ENCODE measurements at regions of chr1 and their contacts with region 1.

Region 1: GRCh38 chr1:174428033-174428432 is 19.7 kb upstream of the GPR52 start:
- DNase-seq: no peak
- H3K4me3 ChIP-seq: no peak overlapping the region
- H3K27ac ChIP-seq: no peak overlapping the region
- H3K4me1 ChIP-seq: no peaks in the 10 kb centered on the region
- H3K27me3 ChIP-seq: no peaks in the 10 kb centered on the region
- CTCF ChIP-seq: no peak
- EP300 ChIP-seq: no peak
- POLR2A ChIP-seq: no peak
- RAD21 ChIP-seq: no peak

Region 2: GRCh38 chr1:174391716-174392115 is 36.3 kb before region 1 on chr1:
- CTCF ChIA-PET with region 1: no interaction called
- POLR2A ChIA-PET with region 1: no interaction called
- DNase-seq: no peak
- H3K4me3 ChIP-seq: no peak overlapping the region
- H3K27ac ChIP-seq: no peak overlapping the region
- H3K4me1 ChIP-seq: no peaks in the 10 kb centered on the region
- H3K27me3 ChIP-seq: no peaks in the 10 kb centered on the region
- CTCF ChIP-seq: no peak
- EP300 ChIP-seq: no peak
- POLR2A ChIP-seq: no peak
- RAD21 ChIP-seq: no peak

Region 3: DNA sequence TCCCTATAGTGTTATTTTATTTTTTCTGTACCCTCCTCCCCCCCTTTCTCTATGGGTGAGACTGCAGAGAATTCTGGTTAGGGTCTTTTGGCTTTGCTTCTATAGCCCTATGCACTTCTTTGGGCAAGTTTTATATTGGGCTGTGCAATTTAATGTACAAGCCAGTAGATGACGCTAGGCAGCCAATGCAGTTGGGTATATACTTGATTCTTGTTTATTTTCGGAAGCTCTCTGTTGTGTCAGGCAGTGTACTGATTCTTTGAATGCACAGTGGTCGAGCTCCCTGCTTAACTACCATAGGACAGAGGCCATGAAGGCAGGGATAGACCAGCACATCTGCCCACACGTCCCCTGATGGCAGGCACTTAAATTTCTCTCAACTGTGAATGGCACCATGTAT is 14.4 kb before region 1 on chr1:
- CTCF ChIA-PET with region 1: interaction called, 11 read pairs
- POLR2A ChIA-PET with region 1: interaction called, 3 read pairs
- DNase-seq: no peak
- H3K4me3 ChIP-seq: no peak overlapping the region
- H3K27ac ChIP-seq: no peak overlapping the region
- H3K4me1 ChIP-seq: no peaks in the 10 kb centered on the region
- H3K27me3 ChIP-seq: no peaks in the 10 kb centered on the region
- CTCF ChIP-seq: peak in 2 of 3 experiments; percentile 44 to 52; a peak in 3 of 4 replicates
- EP300 ChIP-seq: no peak
- POLR2A ChIP-seq: no peak
- RAD21 ChIP-seq: peak; percentile 79 to 82

Region 4: DNA sequence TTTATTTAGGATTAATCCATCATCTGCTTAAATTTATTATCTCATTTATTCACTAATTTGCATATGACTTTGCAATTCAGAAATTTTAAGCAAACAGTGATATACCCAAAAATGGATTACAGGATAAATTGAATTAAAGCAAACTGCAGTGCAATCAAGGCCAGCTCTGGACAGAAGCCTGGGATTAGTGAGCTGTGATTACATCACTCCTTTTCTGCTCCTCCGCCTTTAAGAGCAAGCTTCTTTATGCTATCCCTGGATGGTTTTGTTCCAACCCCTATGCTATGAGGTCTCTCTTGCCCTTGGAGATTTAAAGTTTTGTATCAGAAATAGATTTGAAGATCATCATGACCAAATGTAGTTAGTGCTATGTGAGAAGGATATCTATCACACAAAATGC is 52.3 kb after region 1 on chr1:
- CTCF ChIA-PET with region 1: no interaction called
- POLR2A ChIA-PET with region 1: no interaction called
- DNase-seq: no peak
- H3K4me3 ChIP-seq: no peak overlapping the region
- H3K27ac ChIP-seq: no peak overlapping the region
- H3K4me1 ChIP-seq: no peaks in the 10 kb centered on the region
- H3K27me3 ChIP-seq: no peaks in the 10 kb centered on the region
- CTCF ChIP-seq: no peak
- EP300 ChIP-seq: no peak
- POLR2A ChIP-seq: no peak
- RAD21 ChIP-seq: no peak